Activated CD4-positive, alpha-beta memory T cell treated with anti-CD3 and anti-CD28 coated beads, Interleukin-2, amount 10 ng/mL, durations not matched to agents 7 days and 5 days (primary cell): ENCODE measurements at regions of chr11 and their contacts with region 1.

Region 1: DNA sequence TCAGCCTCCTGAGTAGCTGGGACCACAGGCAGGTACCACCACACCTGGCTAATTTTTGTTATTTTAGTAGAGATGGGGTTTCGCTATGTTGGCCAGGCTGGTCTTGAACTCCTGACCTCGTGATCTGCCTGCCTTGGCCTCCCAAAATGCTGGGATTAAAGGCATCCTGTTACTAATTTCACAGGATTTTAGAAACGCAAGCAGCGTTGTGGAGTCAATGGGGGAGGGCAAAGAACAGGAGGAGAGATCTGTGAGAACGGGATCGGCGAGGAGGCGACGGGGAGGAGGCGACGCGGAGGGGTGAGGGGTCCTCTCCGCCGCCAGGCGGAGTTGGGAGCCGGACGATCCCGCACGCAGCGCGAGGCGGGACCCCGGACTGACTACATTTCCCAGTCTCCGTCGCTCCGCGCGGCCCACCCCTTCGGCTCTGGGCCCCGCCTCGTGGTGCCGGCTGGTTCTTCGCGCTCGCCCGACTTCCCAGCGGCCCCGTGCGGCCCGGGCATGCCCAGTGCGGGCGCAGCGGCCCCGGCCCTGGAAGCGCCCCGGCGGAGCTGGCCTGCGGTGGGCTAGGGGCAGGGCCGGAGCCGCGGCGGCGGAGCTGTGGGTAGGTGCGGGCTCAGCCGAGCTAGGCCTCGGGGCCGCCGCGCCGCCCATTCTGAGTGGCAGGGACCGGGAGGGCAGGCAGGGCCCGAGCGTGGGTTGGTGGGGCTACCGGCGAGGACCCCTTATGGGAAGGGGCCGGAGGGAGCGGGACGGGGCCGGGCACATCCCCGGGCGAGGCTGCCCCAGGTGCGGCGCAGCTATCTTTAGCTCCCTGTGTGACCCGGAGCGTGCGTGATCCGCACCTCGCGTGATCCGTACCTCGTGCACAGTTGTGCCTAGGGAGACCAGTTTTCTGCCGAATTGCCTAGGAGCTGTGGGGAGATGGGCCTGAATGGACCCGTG is at the start of gene EI24:
- DNase-seq: peak; percentile 90
- H3K4me3 Mint-ChIP-seq: peak within 1 kb of the TSS; percentile 95
- H3K27ac Mint-ChIP-seq: peak within 1 kb of the TSS; percentile 80
- H3K4me1 Mint-ChIP-seq: peaks cover 27% of the 10 kb centered on the region
- H3K27me3 Mint-ChIP-seq: no peaks in the 10 kb centered on the region
- total RNA-seq, gene EI24: 31.5 to 33.2 TPM

Region 2: GRCh38 chr11:125481531-125481930 is 87.7 kb before region 1 on chr11:
- CTCF ChIA-PET with region 1: no interaction called
- POLR2A ChIA-PET with region 1: no interaction called
- DNase-seq: no peak
- H3K4me3 Mint-ChIP-seq: no peak overlapping the region
- H3K27ac Mint-ChIP-seq: no peak overlapping the region
- H3K4me1 Mint-ChIP-seq: no peaks in the 10 kb centered on the region
- H3K27me3 Mint-ChIP-seq: peaks cover 7% of the 10 kb centered on the region

Region 3: GRCh38 chr11:125583496-125583895 is 14.3 kb after region 1 on chr11:
- CTCF ChIA-PET with region 1: interaction called, 6 read pairs
- POLR2A ChIA-PET with region 1: interaction called, 21 read pairs
- DNase-seq: no peak
- H3K4me3 Mint-ChIP-seq: no peak overlapping the region
- H3K27ac Mint-ChIP-seq: no peak overlapping the region
- H3K4me1 Mint-ChIP-seq: peaks cover 25% of the 10 kb centered on the region
- H3K27me3 Mint-ChIP-seq: no peaks in the 10 kb centered on the region

Region 4: DNA sequence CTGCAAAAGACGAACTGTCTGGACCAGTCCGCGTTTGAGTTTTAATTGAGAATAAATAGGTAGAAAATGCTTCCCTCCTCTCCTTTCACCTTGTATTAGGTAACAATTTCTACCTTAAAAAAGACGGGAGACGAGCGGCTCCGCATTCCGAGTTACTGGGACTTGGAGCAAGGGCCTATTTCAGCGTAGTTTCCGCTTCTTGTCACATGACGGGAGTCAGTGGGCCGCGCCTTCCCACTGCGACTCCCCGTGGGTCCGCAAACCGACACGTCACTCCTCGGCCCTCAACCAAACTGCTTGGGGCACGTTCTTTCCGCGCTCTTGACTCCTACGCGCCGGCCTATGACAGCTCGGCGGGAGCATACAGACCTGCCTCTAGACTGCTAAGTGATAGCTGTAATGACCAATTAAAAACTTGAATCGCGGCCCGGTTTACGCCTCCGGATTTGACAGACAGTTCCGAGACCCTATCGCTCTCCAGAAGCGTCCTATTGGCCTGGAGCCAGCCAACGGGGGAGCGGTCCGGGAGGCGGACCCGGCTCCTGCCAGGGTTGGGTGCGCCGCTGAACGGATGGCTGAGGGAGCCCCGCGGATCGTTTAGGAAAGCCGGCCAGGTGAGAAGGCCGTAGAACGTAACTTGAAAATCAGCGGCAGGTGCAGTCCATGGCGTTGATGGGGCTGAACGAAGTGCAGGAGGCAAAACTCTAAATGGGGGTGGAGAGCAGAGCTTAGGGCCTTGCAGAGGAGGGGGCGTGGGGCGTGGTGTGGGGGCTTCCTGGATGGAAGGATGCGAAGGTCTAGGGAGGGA is 23.3 kb after region 1 on chr11 and contains the start of gene STT3A:
- CTCF ChIA-PET with region 1: interaction called, 30 read pairs
- POLR2A ChIA-PET with region 1: interaction called, 89 read pairs
- DNase-seq: peak; percentile 98
- H3K4me3 Mint-ChIP-seq: peak within 1 kb of the TSS; percentile 96
- H3K27ac Mint-ChIP-seq: peak within 1 kb of the TSS; percentile 91
- H3K4me1 Mint-ChIP-seq: peaks cover 57% of the 10 kb centered on the region
- H3K27me3 Mint-ChIP-seq: no peaks in the 10 kb centered on the region
- total RNA-seq, gene STT3A: 123 TPM

Region 5: DNA sequence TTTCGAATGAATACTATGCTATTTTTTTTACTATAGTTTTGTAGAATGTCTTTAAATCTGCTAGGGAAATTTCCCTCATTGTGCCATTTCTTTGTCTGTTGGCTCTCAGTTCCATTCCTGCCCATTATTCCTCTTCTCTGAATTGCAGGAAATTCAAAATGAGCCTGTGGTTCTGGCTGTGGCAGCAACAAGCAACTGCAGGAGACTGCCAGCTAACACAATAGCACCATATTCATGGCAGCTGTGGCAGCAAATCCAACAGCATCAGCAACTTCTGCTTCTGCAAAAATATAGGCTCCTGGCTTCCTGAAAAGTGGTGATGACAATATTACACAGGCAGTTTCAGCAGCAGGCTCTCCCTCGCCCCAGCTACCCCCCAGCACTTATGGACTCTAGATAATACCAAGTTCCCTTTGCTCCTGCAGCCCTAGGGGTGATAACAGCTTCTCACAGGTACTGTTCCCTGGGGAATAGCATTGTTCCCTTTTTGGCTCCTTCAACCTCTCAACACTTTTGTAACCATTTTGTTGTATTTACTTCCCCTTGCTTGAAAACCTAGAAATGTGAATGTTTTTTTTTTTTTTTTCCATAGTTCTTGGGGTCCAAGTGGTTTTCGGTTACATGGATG is 273.2 kb after region 1 on chr11:
- CTCF ChIA-PET with region 1: no interaction called
- POLR2A ChIA-PET with region 1: no interaction called
- DNase-seq: no peak
- H3K4me3 Mint-ChIP-seq: no peak overlapping the region
- H3K27ac Mint-ChIP-seq: no peak overlapping the region
- H3K4me1 Mint-ChIP-seq: no peaks in the 10 kb centered on the region
- H3K27me3 Mint-ChIP-seq: peaks cover under 1% of the 10 kb centered on the region